ENCODE measurements at regions of chr2 and their contacts with region 1.

Region 1: DNA sequence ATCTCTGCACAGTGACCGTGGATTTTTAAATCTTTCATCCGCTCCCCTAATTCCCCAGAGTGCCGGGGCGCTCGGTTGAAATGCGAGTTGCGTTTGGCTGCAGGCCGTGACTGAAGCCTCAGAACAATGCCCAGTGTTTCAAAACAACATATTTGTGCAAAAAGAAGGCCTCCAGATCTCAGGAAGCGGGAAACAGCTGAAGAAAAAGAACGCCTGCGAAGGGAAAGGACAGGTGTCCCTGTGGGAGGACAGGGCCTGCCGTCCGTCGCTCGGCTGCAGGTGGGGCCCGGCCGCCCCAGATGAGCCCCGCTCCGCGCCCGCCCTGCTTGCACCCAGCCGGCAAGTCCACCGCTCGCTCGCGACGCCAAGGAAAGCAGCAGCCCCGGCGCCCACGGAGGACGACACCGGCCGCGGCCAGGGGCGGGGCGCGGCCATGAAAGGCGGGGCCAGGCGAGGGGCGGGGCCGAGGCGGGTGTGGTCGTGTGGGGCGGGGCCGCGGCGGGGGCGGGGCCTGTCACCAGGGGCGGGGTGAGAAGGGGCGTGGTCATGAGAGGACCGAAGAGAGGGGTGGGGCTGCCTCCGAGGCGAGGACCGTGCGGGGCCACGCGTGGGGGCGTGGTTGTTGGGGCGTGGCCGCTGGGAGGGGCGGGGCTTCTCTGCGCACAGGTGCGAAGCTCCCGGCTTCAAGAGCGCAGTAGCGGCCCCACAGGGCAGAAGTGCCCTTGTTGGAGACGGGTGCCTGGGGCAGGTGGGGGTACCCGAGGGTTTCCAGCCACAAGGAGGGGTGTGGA is 17.6 kb upstream of the BOK start:
- DNase-seq: peak; percentile 90
- ATAC-seq: peak; percentile 92
- H3K4me3 Mint-ChIP-seq: peak overlapping the region; percentile 31
- H3K27ac Mint-ChIP-seq: no peak overlapping the region
- H3K4me1 Mint-ChIP-seq: peaks cover 4% of the 10 kb centered on the region
- H3K27me3 Mint-ChIP-seq: peaks cover 14% of the 10 kb centered on the region

Region 2: GRCh38 chr2:241443486-241444223 is 97.3 kb before region 1 on chr2:
- CTCF ChIA-PET with region 1: no interaction called
- POLR2A ChIA-PET with region 1: no interaction called
- intact Hi-C with region 1: loop called in 1 of 2 experiments (anchors 1 kb)
- DNase-seq: peak; percentile 95
- ATAC-seq: peak; percentile 86
- H3K4me3 Mint-ChIP-seq: peak overlapping the region; percentile 48
- H3K27ac Mint-ChIP-seq: peak overlapping the region; percentile 45
- H3K4me1 Mint-ChIP-seq: peaks cover 27% of the 10 kb centered on the region
- H3K27me3 Mint-ChIP-seq: peaks cover 37% of the 10 kb centered on the region

Region 3: DNA sequence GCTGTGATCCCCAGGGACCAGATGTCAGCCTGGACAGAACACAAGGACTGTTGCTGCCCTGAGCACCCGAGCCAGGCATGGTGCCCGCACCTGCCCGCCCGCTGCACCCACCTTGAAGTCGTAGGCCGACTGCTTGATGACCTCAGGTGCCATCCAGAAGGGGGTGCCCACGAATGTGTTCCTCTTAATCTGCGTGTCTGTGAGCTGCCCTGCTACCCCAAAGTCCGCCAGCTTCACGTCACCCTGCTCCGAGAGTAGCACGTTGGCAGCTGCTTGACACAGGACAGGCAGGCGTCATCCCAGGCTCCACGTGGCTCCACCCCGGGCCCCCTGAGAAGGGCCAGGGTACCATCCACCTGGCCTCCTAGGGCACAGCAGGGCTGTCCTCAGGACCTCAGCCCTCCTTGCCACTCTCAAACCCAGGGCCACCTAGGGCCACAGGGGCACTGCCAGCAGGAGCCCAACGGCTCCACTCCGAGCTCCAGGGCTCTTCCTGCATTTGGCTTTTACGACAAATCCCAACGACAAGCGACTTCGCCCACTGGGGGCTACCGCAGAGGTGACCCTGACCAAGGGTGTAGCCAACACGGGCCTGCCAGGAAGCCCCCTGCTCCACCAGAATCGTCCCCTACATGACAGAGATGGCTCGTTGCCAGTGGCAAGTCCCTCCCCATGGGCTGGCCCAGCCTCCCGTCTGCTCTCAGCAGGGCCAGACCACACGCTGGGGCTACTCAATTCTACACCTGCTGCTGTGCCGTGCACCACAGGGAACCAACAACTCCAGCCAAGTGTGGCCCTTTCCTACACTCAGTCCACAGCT is 41.6 kb before region 1 on chr2:
- CTCF ChIA-PET with region 1: no interaction called
- POLR2A ChIA-PET with region 1: no interaction called
- intact Hi-C with region 1: no loop called
- DNase-seq: no peak
- ATAC-seq: no peak
- H3K4me3 Mint-ChIP-seq: no peak overlapping the region
- H3K27ac Mint-ChIP-seq: no peak overlapping the region
- H3K4me1 Mint-ChIP-seq: no peaks in the 10 kb centered on the region
- H3K27me3 Mint-ChIP-seq: no peaks in the 10 kb centered on the region

Region 4: DNA sequence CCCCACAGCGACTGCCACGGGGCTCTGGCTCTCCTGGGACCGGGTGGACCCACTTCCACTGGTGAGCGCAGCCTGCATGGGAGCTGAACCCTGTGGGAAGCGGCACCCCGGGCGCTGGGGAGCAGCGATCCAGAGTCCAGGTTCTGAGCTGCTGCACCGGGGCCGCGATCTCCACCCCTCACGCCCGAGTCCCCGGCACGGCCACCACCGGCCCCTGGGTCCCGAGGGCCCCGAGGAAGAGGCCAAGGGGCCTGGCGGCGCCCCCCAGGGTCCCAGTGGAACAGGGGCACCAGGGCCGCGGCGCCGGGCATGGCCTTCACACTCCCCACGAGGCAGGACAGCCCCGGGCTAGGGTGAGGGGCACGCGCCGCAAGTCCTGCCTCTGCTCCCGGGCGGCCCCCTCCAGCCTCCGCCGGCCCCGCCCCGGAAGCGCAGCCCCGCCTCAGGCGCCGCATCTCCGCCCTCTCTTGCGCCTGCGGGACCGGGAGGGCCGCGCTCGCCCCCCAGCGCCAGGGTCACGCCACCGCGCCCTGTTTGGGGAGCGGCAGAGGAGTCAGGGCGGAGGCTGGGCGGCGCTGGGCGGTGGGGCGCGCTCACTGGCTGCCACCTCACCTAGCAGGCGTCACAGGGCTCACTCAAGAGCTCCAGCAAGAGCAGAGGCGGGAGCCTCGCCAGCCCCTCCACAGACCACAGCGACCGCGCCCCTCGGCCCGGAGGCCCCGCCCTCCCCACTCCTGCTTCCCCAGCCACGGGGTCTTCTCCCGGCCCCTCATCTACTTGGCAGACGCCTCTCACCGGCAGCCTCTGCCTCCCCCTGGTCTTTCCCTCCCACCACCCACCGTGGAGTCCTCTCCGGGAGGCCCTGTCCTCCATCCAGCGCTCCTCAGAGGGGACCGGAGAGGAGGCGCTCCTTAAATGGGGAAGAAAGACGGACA is 69.2 kb after region 1 on chr2:
- CTCF ChIA-PET with region 1: no interaction called
- POLR2A ChIA-PET with region 1: no interaction called
- intact Hi-C with region 1: loop called in 1 of 2 experiments (anchors 1 kb)
- DNase-seq: peak; percentile 96
- ATAC-seq: peak; percentile 100
- H3K4me3 Mint-ChIP-seq: peak overlapping the region; percentile 48
- H3K27ac Mint-ChIP-seq: peak overlapping the region; percentile 67
- H3K4me1 Mint-ChIP-seq: peaks cover 14% of the 10 kb centered on the region
- H3K27me3 Mint-ChIP-seq: no peaks in the 10 kb centered on the region